ENCODE measurements at regions of chr1 and their contacts with region 1.

Region 1: GRCh38 chr1:169348383-169349036 is 19.1 kb downstream of the NME7 start:
- DNase-seq: no peak
- CTCF ChIP-seq: peak; percentile 65

Region 2: DNA sequence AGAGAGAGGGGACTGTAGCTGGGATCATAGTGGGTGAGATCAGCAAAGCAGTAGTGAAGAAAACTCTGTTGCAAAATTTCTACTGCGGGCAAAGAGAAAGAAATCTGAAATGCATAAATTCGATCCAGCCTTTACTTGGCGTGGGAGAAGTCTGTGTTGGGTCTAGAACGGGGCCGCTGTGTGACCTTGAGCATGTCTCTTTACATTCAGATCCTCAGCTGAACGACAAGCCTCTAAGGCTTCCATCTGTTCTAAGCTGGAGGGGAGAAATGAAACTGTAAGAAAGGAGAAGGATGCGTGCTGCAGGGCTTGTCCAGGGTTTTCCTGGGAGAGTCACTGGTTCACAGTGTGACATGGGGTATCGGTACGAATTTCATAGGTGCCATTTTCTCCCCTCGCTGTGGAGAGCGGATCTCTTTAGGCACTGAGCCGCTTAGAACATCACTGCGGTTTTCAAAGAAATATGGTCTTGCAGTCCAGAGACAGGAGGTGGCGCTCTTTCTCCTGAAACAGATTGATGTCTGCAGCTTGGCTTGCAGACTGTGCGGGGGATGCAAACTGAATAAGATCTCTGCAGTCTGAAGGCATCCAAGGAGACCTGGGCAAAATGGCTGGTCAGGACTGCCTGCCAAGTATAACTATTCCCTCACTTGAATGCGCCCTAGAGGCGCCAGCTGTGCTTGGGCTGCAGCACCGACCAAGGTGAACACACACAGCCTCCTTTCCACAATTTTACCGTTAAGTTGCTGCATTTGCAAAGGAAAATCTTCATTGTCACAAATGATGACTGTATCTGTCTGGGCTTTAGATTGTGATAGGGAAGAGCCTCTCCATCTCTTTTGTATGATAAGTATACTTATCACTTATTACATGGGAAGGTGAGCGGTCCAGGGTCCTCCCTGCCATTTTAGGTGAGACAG is 908.8 kb before region 1 on chr1:
- CTCF ChIA-PET with region 1: interaction called, 12 read pairs
- POLR2A ChIA-PET with region 1: no interaction called
- DNase-seq: peak; percentile 68
- CTCF ChIP-seq: peak; percentile 79

Region 3: DNA sequence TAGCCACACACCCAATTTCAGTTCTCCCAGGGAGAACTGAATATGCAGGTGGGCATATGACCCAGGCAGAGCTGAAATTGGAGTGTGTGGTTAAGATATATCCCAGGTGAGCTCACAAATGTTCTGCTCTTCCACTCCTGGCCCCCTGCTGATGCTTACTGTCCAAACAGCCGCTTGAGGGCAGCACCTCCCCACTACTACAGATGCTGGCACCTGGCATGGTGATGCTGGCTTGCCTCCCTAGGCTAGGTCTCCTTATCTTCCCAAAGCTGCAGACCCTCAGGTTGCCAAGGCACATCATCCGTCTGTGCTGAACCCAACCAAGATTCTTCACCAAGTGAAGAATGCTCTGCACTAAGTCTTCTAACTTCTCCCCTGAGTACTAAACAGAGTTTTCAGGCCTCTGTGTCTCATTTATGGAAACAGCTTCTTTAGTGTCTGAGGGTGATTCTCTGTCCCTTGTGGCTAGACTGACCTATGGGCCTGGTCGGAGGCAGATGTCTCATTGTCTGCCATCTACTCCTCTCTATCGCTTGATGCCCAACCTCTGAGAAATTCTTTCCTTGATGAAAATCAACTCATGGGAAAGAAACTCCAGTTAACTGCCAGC is 744.9 kb before region 1 on chr1:
- CTCF ChIA-PET with region 1: interaction called, 49 read pairs
- POLR2A ChIA-PET with region 1: no interaction called
- DNase-seq: peak; percentile 67
- CTCF ChIP-seq: peak; percentile 69

Region 4: GRCh38 chr1:168637350-168637991 is 711.0 kb before region 1 on chr1:
- CTCF ChIA-PET with region 1: interaction called, 21 read pairs
- POLR2A ChIA-PET with region 1: no interaction called
- DNase-seq: peak; percentile 29
- CTCF ChIP-seq: peak; percentile 39

Region 5: GRCh38 chr1:169326956-169327268 is 21.6 kb before region 1 on chr1:
- CTCF ChIA-PET with region 1: interaction called, 11 read pairs
- POLR2A ChIA-PET with region 1: no interaction called
- DNase-seq: peak; percentile 28
- CTCF ChIP-seq: no peak

Region 6: GRCh38 chr1:169363046-169363730 is 14.7 kb after region 1 on chr1:
- CTCF ChIA-PET with region 1: interaction called, 30 read pairs
- POLR2A ChIA-PET with region 1: no interaction called
- DNase-seq: peak; percentile 24
- CTCF ChIP-seq: no peak

Region 7: DNA sequence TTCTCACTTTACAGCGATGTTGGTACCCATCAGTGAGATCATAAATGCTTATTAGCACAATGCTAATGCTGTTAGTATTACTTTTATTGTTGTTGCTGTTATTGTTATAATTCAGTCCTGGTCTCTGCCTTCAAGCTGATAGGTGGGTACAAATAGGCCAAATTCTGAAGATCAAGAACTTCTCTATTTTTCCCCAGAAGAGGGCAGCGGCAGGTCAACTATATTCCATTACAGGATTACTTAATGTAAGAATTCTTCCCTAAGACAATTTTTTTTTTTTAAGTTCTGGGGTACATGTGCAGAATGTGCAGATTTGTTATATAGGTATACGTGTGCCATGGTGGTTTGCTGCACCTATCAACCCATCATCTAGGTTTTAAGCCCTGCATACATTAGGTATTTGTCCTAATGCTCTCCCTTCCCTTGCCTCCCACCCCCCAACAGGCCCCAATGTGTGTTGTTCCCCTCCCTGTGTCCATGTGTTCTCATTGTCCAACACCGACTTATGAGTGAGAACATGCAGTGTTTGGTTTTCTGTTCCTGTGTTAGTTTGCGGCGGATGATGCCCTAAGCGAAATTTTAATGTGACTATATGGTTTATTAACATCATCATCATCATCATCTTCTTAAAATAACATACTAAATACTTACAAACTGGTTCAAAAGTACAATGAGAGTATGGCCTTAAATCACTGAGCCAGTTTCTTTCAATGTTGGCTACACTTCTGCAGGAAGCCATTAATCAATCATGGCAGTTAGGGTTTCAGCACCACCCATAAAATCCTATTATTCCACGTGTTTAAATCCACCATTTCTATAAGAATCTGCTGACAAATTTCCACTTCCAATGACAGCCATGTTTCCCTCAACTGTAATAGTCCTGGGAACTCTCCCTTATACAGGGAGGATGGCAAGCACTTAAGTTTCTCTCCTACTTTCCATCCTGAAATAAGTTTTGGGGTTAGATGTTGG is 118.0 kb after region 1 on chr1:
- CTCF ChIA-PET with region 1: no interaction called
- POLR2A ChIA-PET with region 1: no interaction called
- DNase-seq: peak; percentile 20
- CTCF ChIP-seq: peak; percentile 30